CD14-positive monocyte (primary cell): ENCODE measurements at regions of chr11 and their contacts with region 1.

Region 1: GRCh38 chr11:63635762-63636465 is 21.7 kb upstream of the PLAAT3 start:
- DNase-seq: peak; percentile 60 to 75 (median 72)
- H3K4me3 ChIP-seq: no peak overlapping the region
- H3K4me3 Mint-ChIP-seq: no peak overlapping the region
- H3K27ac ChIP-seq: no peak overlapping the region
- H3K27ac Mint-ChIP-seq: peak overlapping the region in 6 of 7 donors; percentile 26 to 80 (median 51)
- H3K4me1 ChIP-seq: peaks cover 33 to 40% of the 10 kb centered on the region in 2 donors
- H3K4me1 Mint-ChIP-seq: peaks cover 33% of the 10 kb centered on the region
- H3K27me3 ChIP-seq: no peaks in the 10 kb centered on the region
- H3K27me3 Mint-ChIP-seq: peaks cover 0 to 3% (median 0%) of the 10 kb centered on the region in 3 donors
- CTCF ChIP-seq: peak; percentile 90

Region 2: DNA sequence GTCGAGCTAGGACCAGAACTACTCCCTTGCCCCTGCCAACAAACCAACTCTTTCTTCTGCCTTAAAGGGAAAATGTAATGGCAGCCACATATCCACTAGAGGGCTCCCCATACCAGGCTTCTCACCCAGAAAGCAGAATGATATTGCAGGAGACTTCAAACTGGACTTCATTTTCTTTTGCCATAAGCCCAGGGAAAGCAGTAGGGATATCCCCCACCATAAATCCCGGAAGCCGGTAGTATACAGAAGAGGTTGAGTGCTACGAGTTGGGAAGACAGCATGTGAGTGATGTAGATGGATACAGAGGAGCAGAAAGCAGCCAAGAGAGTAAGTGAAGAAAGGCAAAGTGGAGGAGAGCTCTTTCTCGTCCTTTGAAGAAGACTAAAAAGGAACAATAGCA is 157.0 kb before region 1 on chr11:
- intact Hi-C with region 1: loop called (anchors 2 kb)
- DNase-seq: peak; percentile 55 to 75 (median 69)
- H3K4me3 ChIP-seq: no peak overlapping the region
- H3K4me3 Mint-ChIP-seq: no peak overlapping the region
- H3K27ac ChIP-seq: no peak overlapping the region
- H3K27ac Mint-ChIP-seq: no peak overlapping the region
- H3K4me1 ChIP-seq: peaks cover 0 to 3% of the 10 kb centered on the region in 2 donors
- H3K4me1 Mint-ChIP-seq: no peaks in the 10 kb centered on the region
- H3K27me3 ChIP-seq: no peaks in the 10 kb centered on the region
- H3K27me3 Mint-ChIP-seq: peaks cover 2 to 9% (median 5%) of the 10 kb centered on the region in 3 donors
- CTCF ChIP-seq: peak; percentile 92

Region 3: GRCh38 chr11:63592975-63593395 is 42.9 kb before region 1 on chr11:
- intact Hi-C with region 1: loop called (anchors 1 to 2 kb)
- DNase-seq: peak; percentile 33 to 47 (median 42)
- H3K4me3 ChIP-seq: no peak overlapping the region
- H3K4me3 Mint-ChIP-seq: no peak overlapping the region
- H3K27ac ChIP-seq: no peak overlapping the region
- H3K27ac Mint-ChIP-seq: no peak overlapping the region
- H3K4me1 ChIP-seq: no peaks in the 10 kb centered on the region
- H3K4me1 Mint-ChIP-seq: peaks cover 4% of the 10 kb centered on the region
- H3K27me3 ChIP-seq: no peaks in the 10 kb centered on the region
- H3K27me3 Mint-ChIP-seq: peaks cover 2 to 7% (median 4%) of the 10 kb centered on the region in 3 donors
- CTCF ChIP-seq: peak; percentile 77

Region 4: GRCh38 chr11:63671322-63672155 is 35.6 kb after region 1 on chr11 and contains the start of gene ATL3:
- intact Hi-C with region 1: no loop called
- DNase-seq: peak; percentile 86 to 91 (median 88)
- H3K4me3 ChIP-seq: peak within 1 kb of the TSS; percentile 64 to 90 (median 87)
- H3K4me3 Mint-ChIP-seq: peak within 1 kb of the TSS; percentile 83 to 91
- H3K27ac ChIP-seq: peak within 1 kb of the TSS; percentile 74 to 83
- H3K27ac Mint-ChIP-seq: peak within 1 kb of the TSS; percentile 80 to 93 (median 90)
- H3K4me1 ChIP-seq: peaks cover 38% of the 10 kb centered on the region in 2 donors
- H3K4me1 Mint-ChIP-seq: peaks cover 40% of the 10 kb centered on the region
- H3K27me3 ChIP-seq: no peaks in the 10 kb centered on the region
- H3K27me3 Mint-ChIP-seq: no peaks in the 10 kb centered on the region
- CTCF ChIP-seq: no peak
- polyA plus RNA-seq, gene ATL3: 10.6 to 25.5 (median 22.7) TPM